ENCODE measurements at regions of chr14 and their contacts with region 1.

Region 1: GRCh38 chr14:93206793-93207467 is at the starts of genes GON7 and UBR7:
- DNase-seq: peak; percentile 75
- H3K4me3 ChIP-seq: peak within 1 kb of the TSS; percentile 92
- CTCF ChIP-seq: peak; percentile 45

Region 2: DNA sequence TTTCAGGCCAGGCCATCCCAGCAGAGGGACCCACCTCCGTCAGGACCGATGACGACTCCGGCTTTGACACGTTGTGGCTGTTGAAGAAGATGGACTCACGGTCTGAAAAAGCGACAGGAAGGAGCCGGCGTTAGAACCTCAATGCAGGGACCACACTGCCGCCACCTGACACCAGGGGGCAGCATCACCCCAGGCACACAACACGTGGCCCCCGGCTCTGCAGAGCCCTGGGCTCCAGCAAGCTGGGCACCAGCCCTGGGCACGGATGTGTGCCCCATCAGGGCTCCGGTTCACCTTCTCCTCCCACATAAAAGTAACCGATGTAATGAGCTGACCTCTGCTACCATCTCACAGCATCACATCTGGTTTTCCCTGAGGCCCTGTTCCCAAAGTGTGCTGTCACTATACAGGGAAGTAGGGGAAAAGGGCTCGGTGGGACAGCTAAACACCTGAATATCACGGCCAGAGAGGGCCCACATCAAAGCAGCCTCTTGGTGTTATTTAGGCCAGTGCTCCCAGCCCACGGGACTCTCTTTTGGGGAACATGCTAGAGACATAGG is 254.9 kb before region 1 on chr14:
- CTCF ChIA-PET with region 1: interaction called, 10 read pairs
- POLR2A ChIA-PET with region 1: no interaction called
- DNase-seq: no peak
- H3K4me3 ChIP-seq: no peak overlapping the region
- CTCF ChIP-seq: peak; percentile 97

Region 3: GRCh38 chr14:93184388-93185353 is 22.3 kb before region 1 on chr14 and contains the starts of genes LYSET and MOAP1:
- CTCF ChIA-PET with region 1: interaction called, 16 read pairs
- POLR2A ChIA-PET with region 1: interaction called, 7 read pairs
- DNase-seq: no peak
- H3K4me3 ChIP-seq: peak within 1 kb of the TSS; percentile 96
- CTCF ChIP-seq: peak; percentile 6

Region 4: GRCh38 chr14:93195316-93195999 is 11.5 kb before region 1 on chr14:
- CTCF ChIA-PET with region 1: interaction called, 27 read pairs
- POLR2A ChIA-PET with region 1: interaction called, 5 read pairs
- DNase-seq: no peak
- H3K4me3 ChIP-seq: no peak overlapping the region
- CTCF ChIP-seq: no peak

Region 5: GRCh38 chr14:93219103-93219726 is 12.3 kb after region 1 on chr14:
- CTCF ChIA-PET with region 1: interaction called, 13 read pairs
- POLR2A ChIA-PET with region 1: no interaction called
- DNase-seq: no peak
- H3K4me3 ChIP-seq: no peak overlapping the region
- CTCF ChIP-seq: peak; percentile 59

Region 6: GRCh38 chr14:93543766-93544165 is 336.8 kb after region 1 on chr14:
- CTCF ChIA-PET with region 1: interaction called, 16 read pairs
- POLR2A ChIA-PET with region 1: no interaction called
- DNase-seq: no peak
- H3K4me3 ChIP-seq: no peak overlapping the region
- CTCF ChIP-seq: no peak

Measured in AG04449 (cell line).